ENCODE measurements at regions of chr11 and their contacts with region 1.

Region 1: DNA sequence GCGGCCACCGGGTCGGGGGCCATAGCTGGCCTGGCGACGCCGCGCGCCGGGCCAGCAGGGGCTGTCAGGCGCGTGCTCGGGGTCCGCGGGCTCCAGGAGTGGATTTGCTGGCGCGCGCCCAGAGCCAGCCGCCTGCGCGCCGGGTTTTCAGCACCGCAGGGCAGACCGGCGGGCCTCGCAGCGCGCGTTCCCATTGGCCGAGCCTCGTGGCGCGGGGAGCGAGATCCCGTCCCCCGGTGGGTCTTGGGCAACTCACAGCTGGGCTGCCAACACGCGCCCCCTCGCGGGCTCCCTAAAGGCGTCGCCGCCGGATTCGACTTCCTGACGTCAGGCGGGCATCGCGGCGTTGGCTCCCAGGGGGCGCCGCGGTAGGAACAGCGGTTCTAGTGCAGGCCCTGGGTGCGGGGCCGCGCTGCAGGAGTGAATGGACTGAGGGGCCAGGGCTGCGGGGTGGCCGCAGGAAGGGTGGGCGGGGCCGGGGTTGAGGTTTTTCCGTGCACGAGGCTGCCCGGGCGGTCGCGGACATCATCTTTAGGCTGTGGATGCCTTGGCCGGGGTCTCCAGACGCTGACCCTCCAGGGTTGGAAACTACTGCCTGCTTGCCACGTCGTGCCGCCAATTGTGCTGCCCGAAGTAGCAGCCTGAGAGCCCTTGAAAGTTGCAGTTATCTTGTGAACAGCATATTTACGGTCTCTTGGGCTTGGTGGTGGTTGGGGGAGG is at the start of gene FADS1:
- DNase-seq: no peak
- H3K4me3 ChIP-seq: peak within 1 kb of the TSS; percentile 72
- CTCF ChIP-seq: peak; percentile 50

Region 2: DNA sequence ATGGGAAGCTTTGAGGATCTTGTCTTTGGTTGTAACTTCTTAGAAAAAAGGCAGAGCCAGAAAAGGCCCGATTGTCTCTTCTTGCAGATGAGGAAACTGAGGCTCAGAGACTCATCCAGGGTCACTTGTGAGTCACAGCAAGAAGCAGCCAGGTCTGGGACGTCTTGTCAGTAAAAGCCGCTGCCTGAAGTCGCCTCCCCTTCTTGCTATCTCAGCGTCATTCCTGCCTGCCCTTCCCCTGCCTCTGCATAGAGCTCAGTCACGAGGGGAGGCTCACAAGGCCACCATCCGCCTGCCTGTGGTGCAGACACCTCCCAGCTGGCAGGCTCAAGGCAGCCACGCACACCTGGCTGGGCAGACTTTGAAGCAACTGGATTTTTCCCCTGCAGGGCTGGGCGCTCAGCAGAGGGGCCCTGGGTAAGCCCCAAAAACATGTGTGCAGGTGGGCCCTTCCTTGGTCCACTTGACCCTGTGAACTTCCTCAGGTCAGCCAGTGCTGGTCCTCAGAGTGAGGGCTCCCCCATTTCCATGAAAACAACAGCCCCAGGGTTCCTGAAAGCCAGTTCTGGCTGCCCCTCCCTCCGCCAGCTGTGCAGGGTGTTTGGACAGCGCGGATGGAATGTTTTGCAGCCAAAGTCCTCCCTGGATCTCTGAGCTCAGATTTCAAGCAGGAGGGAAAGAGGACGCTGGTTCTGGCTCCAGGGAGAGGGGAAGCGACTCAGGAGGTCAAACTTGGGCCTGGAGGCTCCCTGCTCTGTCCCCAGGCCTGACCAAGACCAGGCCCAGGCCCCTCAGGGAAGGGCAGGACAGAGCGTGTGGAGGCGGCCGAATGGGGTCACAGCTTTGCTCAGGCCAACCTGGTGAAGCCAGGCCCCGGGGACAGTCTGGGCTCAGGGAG is 106.5 kb after region 1 on chr11:
- in situ Hi-C with region 1: loop called (anchors 10 kb)
- DNase-seq: no peak
- H3K4me3 ChIP-seq: no peak overlapping the region
- CTCF ChIP-seq: no peak

Region 3: GRCh38 chr11:62108017-62108750 is 291.3 kb after region 1 on chr11:
- in situ Hi-C with region 1: loop called (anchors 10 kb)
- DNase-seq: peak; percentile 51
- H3K4me3 ChIP-seq: no peak overlapping the region
- CTCF ChIP-seq: peak; percentile 76